K562 (cell line): ENCODE measurements at regions of chr11 and their contacts with region 1.

Region 1: DNA sequence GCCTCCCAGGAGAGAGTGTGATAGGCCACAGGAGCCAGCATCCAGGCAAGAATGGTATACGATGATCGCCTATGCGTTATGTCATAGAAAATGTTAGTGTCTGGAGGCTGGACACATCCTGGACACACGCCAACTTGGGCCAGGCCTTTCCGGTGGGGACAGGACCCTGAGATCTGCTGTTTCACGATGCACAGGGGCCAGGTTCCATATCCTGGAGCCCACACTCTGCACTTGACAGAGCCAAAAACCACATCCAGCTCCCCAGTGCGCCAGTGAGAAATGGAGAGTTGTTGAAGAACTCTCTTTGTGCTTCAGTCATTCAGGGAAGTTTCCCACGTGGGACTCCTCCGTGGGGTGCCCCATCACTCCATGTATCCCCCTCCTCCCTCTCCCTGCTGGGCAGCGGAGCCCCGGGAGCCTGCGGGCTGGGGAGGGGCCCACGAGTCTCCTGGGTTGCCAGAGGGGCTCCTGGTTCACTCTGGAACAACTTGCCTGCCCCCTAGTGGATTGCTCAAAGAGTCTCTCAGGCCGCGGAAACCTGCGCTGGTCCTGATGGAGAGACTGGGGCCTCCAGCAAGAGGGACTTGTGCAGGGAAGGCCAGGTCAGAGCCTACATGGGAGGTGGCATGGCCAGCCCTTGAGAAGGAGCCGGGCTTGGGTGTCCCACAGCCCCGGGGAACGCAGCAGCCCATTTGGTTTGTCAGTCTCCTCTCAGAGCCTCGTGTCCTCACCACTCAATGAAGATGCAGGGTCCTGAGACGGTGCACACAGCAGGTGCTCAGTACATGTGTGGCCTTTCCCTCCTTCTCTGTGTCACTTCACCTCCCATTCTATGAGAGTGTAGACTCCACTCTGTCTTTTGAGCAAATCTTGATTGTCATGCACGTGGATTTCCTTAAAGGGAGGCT is 10.2 kb upstream of the LRRC32 start:
- DNase-seq: peak; percentile 81 to 84 (median 84)
- ATAC-seq: peak; percentile 96
- H3K4me3 ChIP-seq: no peak overlapping the region
- H3K27ac ChIP-seq: no peak overlapping the region
- H3K4me1 ChIP-seq: peaks cover 0 to 5% of the 10 kb centered on the region in 2 experiments; a peak in 2 of 5 replicates
- H3K27me3 ChIP-seq: peaks cover 3 to 43% of the 10 kb centered on the region in 2 experiments; a peak in 4 of 5 replicates
- CTCF ChIP-seq: peak; percentile 79 to 86 (median 85)
- EP300 ChIP-seq: no peak
- POLR2A ChIP-seq: no peak
- RAD21 ChIP-seq: peak; percentile 91 to 93

Region 2: GRCh38 chr11:76207642-76208401 is 472.9 kb before region 1 on chr11:
- CTCF ChIA-PET with region 1: no interaction called
- POLR2A ChIA-PET with region 1: no interaction called
- in situ Hi-C with region 1: no loop called
- intact Hi-C with region 1: loop called (anchors 10 kb)
- DNase-seq: peak; percentile 87 to 92 (median 90)
- ATAC-seq: peak; percentile 90
- H3K4me3 ChIP-seq: peak overlapping the region; percentile 46
- H3K27ac ChIP-seq: no peak overlapping the region
- H3K4me1 ChIP-seq: peaks cover 18 to 59% of the 10 kb centered on the region in 2 experiments; a peak in 4 of 5 replicates
- H3K27me3 ChIP-seq: peaks cover 0 to 29% of the 10 kb centered on the region in 2 experiments; a peak in 2 of 5 replicates
- CTCF ChIP-seq: peak; percentile 92 to 94 (median 93)
- EP300 ChIP-seq: no peak
- POLR2A ChIP-seq: no peak
- RAD21 ChIP-seq: peak; percentile 93 to 95

Region 3: DNA sequence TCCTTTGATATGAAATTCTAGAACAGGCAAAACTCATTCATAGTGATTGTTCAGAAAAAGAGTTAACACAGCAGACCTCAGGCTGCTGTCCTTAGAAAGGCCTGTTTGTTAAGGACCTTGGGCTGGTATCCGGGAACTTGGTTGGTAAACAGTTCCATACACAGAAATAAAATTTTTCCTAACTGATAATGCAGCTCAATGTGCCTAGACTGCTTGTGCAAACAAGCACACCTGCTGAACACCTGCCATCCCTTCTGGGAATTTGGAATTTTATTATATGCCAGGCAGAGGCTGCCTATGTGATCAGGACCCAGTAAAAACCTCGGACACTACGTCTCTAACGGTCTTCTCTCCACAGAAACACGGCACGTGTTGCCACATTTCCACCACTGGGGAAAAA is 311.4 kb before region 1 on chr11:
- CTCF ChIA-PET with region 1: no interaction called
- POLR2A ChIA-PET with region 1: no interaction called
- in situ Hi-C with region 1: no loop called
- intact Hi-C with region 1: no loop called
- DNase-seq: no peak
- ATAC-seq: no peak
- H3K4me3 ChIP-seq: no peak overlapping the region
- H3K27ac ChIP-seq: no peak overlapping the region
- H3K4me1 ChIP-seq: peaks cover 15 to 17% of the 10 kb centered on the region in 2 experiments
- H3K27me3 ChIP-seq: no peaks in the 10 kb centered on the region
- CTCF ChIP-seq: no peak
- EP300 ChIP-seq: no peak
- POLR2A ChIP-seq: no peak
- RAD21 ChIP-seq: no peak

Region 4: DNA sequence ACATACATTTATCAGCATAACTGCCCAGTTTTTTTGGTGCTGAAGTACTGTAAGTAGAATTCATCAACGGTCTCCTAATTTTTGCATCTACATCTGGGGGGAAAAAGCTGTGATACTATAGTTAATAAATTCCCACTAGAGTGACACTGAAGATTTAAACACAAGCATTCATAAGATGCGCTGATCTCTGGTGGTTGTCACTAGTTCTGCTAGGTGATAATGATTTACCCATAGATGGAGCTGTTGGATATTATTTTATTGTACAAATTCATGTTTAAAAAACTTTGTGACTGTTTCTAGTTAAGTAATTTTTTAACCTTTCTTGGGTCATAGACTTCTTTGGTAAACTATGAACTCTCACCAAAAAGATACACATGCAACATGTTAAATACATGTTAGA is 129.4 kb before region 1 on chr11:
- CTCF ChIA-PET with region 1: interaction called, 10 read pairs
- POLR2A ChIA-PET with region 1: no interaction called
- in situ Hi-C with region 1: no loop called
- intact Hi-C with region 1: no loop called
- DNase-seq: no peak
- ATAC-seq: no peak
- H3K4me3 ChIP-seq: no peak overlapping the region
- H3K27ac ChIP-seq: no peak overlapping the region
- H3K4me1 ChIP-seq: no peaks in the 10 kb centered on the region
- H3K27me3 ChIP-seq: no peaks in the 10 kb centered on the region
- CTCF ChIP-seq: peak in 2 of 3 experiments; percentile 10 to 35; a peak in 3 of 6 replicates
- EP300 ChIP-seq: no peak
- POLR2A ChIP-seq: no peak
- RAD21 ChIP-seq: peak in 1 of 2 experiments; percentile 23; a peak in 2 of 4 replicates

Region 5: GRCh38 chr11:76577199-76577920 is 103.4 kb before region 1 on chr11:
- CTCF ChIA-PET with region 1: no interaction called
- POLR2A ChIA-PET with region 1: no interaction called
- in situ Hi-C with region 1: no loop called
- intact Hi-C with region 1: loop called (anchors 5 kb)
- DNase-seq: no peak
- ATAC-seq: no peak; the same call in 1 of the 3 replicates
- H3K4me3 ChIP-seq: no peak overlapping the region
- H3K27ac ChIP-seq: no peak overlapping the region
- H3K4me1 ChIP-seq: peaks cover 0 to 12% of the 10 kb centered on the region in 2 experiments; a peak in 2 of 5 replicates
- H3K27me3 ChIP-seq: no peaks in the 10 kb centered on the region
- CTCF ChIP-seq: no peak
- EP300 ChIP-seq: no peak
- POLR2A ChIP-seq: no peak
- RAD21 ChIP-seq: no peak

Region 6: GRCh38 chr11:76598426-76598839 is 82.3 kb before region 1 on chr11:
- CTCF ChIA-PET with region 1: no interaction called
- POLR2A ChIA-PET with region 1: interaction called, 3 read pairs
- in situ Hi-C with region 1: no loop called
- intact Hi-C with region 1: loop called (anchors 1 kb)
- DNase-seq: peak; percentile 49 to 59 (median 58)
- ATAC-seq: peak; percentile 88
- H3K4me3 ChIP-seq: no peak overlapping the region
- H3K27ac ChIP-seq: no peak overlapping the region
- H3K4me1 ChIP-seq: peaks cover 0 to 5% of the 10 kb centered on the region in 2 experiments; a peak in 3 of 5 replicates
- H3K27me3 ChIP-seq: peaks cover 0 to 18% of the 10 kb centered on the region in 2 experiments; a peak in 2 of 5 replicates
- CTCF ChIP-seq: peak; percentile 56 to 75 (median 68)
- EP300 ChIP-seq: no peak
- POLR2A ChIP-seq: no peak
- RAD21 ChIP-seq: peak; percentile 48 to 72

Region 7: GRCh38 chr11:76610871-76611475 is 69.8 kb before region 1 on chr11:
- CTCF ChIA-PET with region 1: no interaction called
- POLR2A ChIA-PET with region 1: no interaction called
- in situ Hi-C with region 1: no loop called
- intact Hi-C with region 1: loop called (anchors 1 kb)
- DNase-seq: peak in 1 of 4 experiments; percentile 18
- ATAC-seq: peak; percentile 61; the same call in 2 of the 3 replicates
- H3K4me3 ChIP-seq: no peak overlapping the region
- H3K27ac ChIP-seq: no peak overlapping the region
- H3K4me1 ChIP-seq: 0 out of 5 replicates have a peak, but pooled peaks cover 0 to 3% of the 10 kb centered on the region in 2 experiments
- H3K27me3 ChIP-seq: peaks cover 0 to 6% of the 10 kb centered on the region in 2 experiments; a peak in 2 of 5 replicates
- CTCF ChIP-seq: peak; percentile 31 to 51 (median 44); a peak in 5 of 6 replicates
- EP300 ChIP-seq: no peak
- POLR2A ChIP-seq: no peak
- RAD21 ChIP-seq: peak; percentile 36 to 61

Region 8: GRCh38 chr11:76649851-76650372 is 30.9 kb before region 1 on chr11:
- CTCF ChIA-PET with region 1: no interaction called
- POLR2A ChIA-PET with region 1: no interaction called
- in situ Hi-C with region 1: no loop called
- intact Hi-C with region 1: no loop called
- DNase-seq: no peak
- ATAC-seq: no peak
- H3K4me3 ChIP-seq: no peak overlapping the region
- H3K27ac ChIP-seq: no peak overlapping the region
- H3K4me1 ChIP-seq: peaks cover 10 to 11% of the 10 kb centered on the region in 2 experiments; a peak in 4 of 5 replicates
- H3K27me3 ChIP-seq: peaks cover 6 to 10% of the 10 kb centered on the region in 2 experiments; a peak in 2 of 5 replicates
- CTCF ChIP-seq: no peak
- EP300 ChIP-seq: no peak
- POLR2A ChIP-seq: no peak
- RAD21 ChIP-seq: no peak

Region 9: DNA sequence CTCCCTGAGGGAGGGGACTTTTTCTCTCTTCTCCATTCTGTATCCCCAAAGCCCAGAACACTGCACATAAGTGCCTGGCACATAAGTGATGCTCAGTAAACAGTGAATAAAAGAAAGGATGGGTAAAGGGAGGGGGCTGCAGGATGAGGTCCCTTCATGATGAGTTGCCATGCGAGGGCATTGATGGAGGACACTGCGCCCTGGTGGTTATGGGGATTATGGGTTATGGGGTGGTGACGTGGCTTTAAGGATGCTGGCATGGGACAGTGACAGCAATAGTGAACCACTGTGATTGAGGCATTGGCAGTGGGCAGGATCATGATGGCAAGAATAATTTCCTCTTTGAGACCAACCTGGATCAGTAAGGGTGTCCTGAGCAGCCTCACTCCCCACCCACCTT is 33.7 kb after region 1 on chr11:
- CTCF ChIA-PET with region 1: no interaction called
- POLR2A ChIA-PET with region 1: no interaction called
- in situ Hi-C with region 1: no loop called
- intact Hi-C with region 1: no loop called
- DNase-seq: no peak
- ATAC-seq: peak; percentile 61
- H3K4me3 ChIP-seq: no peak overlapping the region
- H3K27ac ChIP-seq: no peak overlapping the region
- H3K4me1 ChIP-seq: peaks cover 0 to 15% of the 10 kb centered on the region in 2 experiments; a peak in 2 of 5 replicates
- H3K27me3 ChIP-seq: no peaks in the 10 kb centered on the region
- CTCF ChIP-seq: peak; percentile 22 to 46 (median 43); a peak in 4 of 6 replicates
- EP300 ChIP-seq: no peak
- POLR2A ChIP-seq: no peak
- RAD21 ChIP-seq: peak; percentile 27 to 65

Region 10: DNA sequence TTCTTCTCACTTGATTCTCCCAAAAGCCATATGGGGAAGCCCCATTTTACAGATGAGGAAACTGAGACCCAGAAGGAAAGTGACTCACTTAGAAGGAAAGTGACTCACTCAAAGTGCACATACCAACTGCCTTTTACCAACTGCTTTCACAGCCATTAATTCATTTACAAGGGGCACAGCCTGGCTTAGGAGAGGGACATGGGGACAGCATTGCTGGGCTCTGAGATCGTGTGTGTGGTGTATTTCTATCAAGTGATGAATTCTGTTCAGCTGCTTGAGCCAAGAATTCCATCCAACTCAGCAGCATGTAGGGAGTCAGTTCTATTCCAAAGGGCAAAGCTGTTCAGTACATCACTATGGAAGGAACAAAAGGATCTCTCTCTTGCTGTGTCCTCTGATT is 816.6 kb after region 1 on chr11:
- CTCF ChIA-PET with region 1: interaction called, 11 read pairs
- POLR2A ChIA-PET with region 1: no interaction called
- in situ Hi-C with region 1: no loop called
- intact Hi-C with region 1: no loop called
- DNase-seq: no peak
- ATAC-seq: no peak
- H3K4me3 ChIP-seq: no peak overlapping the region
- H3K27ac ChIP-seq: no peak overlapping the region
- H3K4me1 ChIP-seq: no peaks in the 10 kb centered on the region
- H3K27me3 ChIP-seq: peaks cover 3 to 17% of the 10 kb centered on the region in 2 experiments; a peak in 3 of 5 replicates
- CTCF ChIP-seq: no peak
- EP300 ChIP-seq: no peak
- POLR2A ChIP-seq: no peak
- RAD21 ChIP-seq: no peak